HCT116 (cell line): ENCODE measurements at regions of chr4 and their contacts with region 1.

Region 1: GRCh38 chr4:169612871-169613859 is 782 bp upstream of the NEK1 start:
- DNase-seq: peak; percentile 68
- ATAC-seq: peak; percentile 65
- H3K4me3 ChIP-seq: peak overlapping the region; percentile 84 to 93
- H3K27ac ChIP-seq: peak overlapping the region; percentile 33; the same call in 1 of the 2 replicates
- H3K4me1 ChIP-seq: peaks cover 6 to 24% of the 10 kb centered on the region in 2 experiments; a peak in 3 of 4 replicates
- H3K27me3 ChIP-seq: no peaks in the 10 kb centered on the region
- CTCF ChIP-seq: peak in 2 of 3 experiments; percentile 77 to 85; a peak in 4 of 6 replicates
- POLR2A ChIP-seq: no peak
- RAD21 ChIP-seq: no peak

Region 2: GRCh38 chr4:169659716-169660670 is 46.8 kb after region 1 on chr4:
- CTCF ChIA-PET with region 1: interaction called, 4 read pairs
- POLR2A ChIA-PET with region 1: interaction called, 3 read pairs
- RAD21 ChIA-PET with region 1: no interaction called
- intact Hi-C with region 1: loop called (anchors 2 kb)
- DNase-seq: peak; percentile 99
- ATAC-seq: peak; percentile 94
- H3K4me3 ChIP-seq: peak overlapping the region; percentile 60 to 63
- H3K27ac ChIP-seq: peak overlapping the region; percentile 79
- H3K4me1 ChIP-seq: peaks cover 32 to 44% of the 10 kb centered on the region in 2 experiments
- H3K27me3 ChIP-seq: no peaks in the 10 kb centered on the region
- CTCF ChIP-seq: no peak
- POLR2A ChIP-seq: no peak
- RAD21 ChIP-seq: no peak

Region 3: DNA sequence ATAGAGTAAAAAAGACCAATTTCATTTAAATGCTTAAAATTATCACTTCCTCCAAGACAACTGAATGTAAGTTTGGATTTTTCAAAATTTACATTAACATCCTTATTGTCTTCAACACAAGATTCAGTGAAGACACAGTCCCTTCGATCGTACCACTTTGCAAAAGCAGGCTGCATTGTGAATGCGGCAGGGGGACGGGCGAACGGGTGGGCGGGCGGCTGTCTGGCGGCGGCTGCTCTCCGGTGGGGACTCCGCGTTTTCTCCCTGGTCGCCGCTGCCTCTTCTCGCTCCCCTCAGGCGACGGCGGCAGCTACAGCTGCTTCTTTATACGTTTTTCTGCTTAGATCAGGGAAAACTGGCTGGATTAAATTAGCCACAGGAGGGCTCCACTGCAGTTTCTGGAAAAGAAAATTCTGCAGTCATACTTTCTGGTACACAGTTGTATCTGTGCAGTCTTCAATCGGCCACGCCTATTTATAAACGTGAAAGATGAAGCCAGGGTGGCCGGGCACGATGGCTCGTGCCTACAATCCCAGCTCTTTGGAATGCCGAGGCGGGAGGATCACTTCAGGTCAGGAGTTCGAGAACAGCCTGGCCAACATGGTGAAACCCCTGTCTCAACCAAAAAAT is 178.5 kb after region 1 on chr4:
- CTCF ChIA-PET with region 1: interaction called, 4 read pairs
- POLR2A ChIA-PET with region 1: no interaction called
- RAD21 ChIA-PET with region 1: no interaction called
- intact Hi-C with region 1: loop called (anchors 5 kb)
- DNase-seq: peak; percentile 85
- ATAC-seq: peak; percentile 91
- H3K4me3 ChIP-seq: peak overlapping the region; percentile 34 to 46
- H3K27ac ChIP-seq: no peak overlapping the region
- H3K4me1 ChIP-seq: peaks cover 2 to 20% of the 10 kb centered on the region in 2 experiments; a peak in 2 of 4 replicates
- H3K27me3 ChIP-seq: peaks cover 12% of the 10 kb centered on the region; the same call in 1 of the 2 replicates
- CTCF ChIP-seq: peak; percentile 47 to 76 (median 63)
- POLR2A ChIP-seq: no peak
- RAD21 ChIP-seq: peak; percentile 71

Region 4: GRCh38 chr4:169810325-169811323 is 197.5 kb after region 1 on chr4:
- CTCF ChIA-PET with region 1: interaction called, 6 read pairs
- POLR2A ChIA-PET with region 1: no interaction called
- RAD21 ChIA-PET with region 1: interaction called in 1 of 2 experiments, 3 read pairs
- intact Hi-C with region 1: loop called (anchors 5 kb)
- DNase-seq: peak; percentile 84
- ATAC-seq: peak; percentile 89
- H3K4me3 ChIP-seq: no peak overlapping the region
- H3K27ac ChIP-seq: no peak overlapping the region
- H3K4me1 ChIP-seq: peaks cover 0 to 3% of the 10 kb centered on the region in 2 experiments; a peak in 2 of 4 replicates
- H3K27me3 ChIP-seq: no peaks in the 10 kb centered on the region
- CTCF ChIP-seq: peak; percentile 72 to 87 (median 86)
- POLR2A ChIP-seq: no peak
- RAD21 ChIP-seq: peak; percentile 87

Region 5: GRCh38 chr4:170027181-170027829 is 414.1 kb after region 1 on chr4:
- CTCF ChIA-PET with region 1: interaction called, 4 read pairs
- POLR2A ChIA-PET with region 1: no interaction called
- RAD21 ChIA-PET with region 1: no interaction called
- intact Hi-C with region 1: loop called (anchors 2 kb)
- DNase-seq: peak; percentile 95
- ATAC-seq: peak; percentile 72
- H3K4me3 ChIP-seq: peak overlapping the region; percentile 77 to 82
- H3K27ac ChIP-seq: peak overlapping the region; percentile 75
- H3K4me1 ChIP-seq: peaks cover 2 to 16% of the 10 kb centered on the region in 2 experiments
- H3K27me3 ChIP-seq: no peaks in the 10 kb centered on the region
- CTCF ChIP-seq: no peak
- POLR2A ChIP-seq: no peak
- RAD21 ChIP-seq: no peak

Region 6: GRCh38 chr4:170047771-170048354 is 434.7 kb after region 1 on chr4:
- CTCF ChIA-PET with region 1: interaction called, 16 read pairs
- POLR2A ChIA-PET with region 1: no interaction called
- RAD21 ChIA-PET with region 1: no interaction called
- intact Hi-C with region 1: loop called (anchors 2 kb)
- DNase-seq: peak; percentile 57
- ATAC-seq: 0 out of 2 replicates have a peak, but pooled peaks have one; percentile 55
- H3K4me3 ChIP-seq: no peak overlapping the region
- H3K27ac ChIP-seq: no peak overlapping the region
- H3K4me1 ChIP-seq: no peaks in the 10 kb centered on the region
- H3K27me3 ChIP-seq: no peaks in the 10 kb centered on the region
- CTCF ChIP-seq: peak; percentile 54 to 85 (median 72)
- POLR2A ChIP-seq: no peak
- RAD21 ChIP-seq: peak; percentile 89

Region 7: GRCh38 chr4:170089668-170090351 is 476.6 kb after region 1 on chr4 and contains the start of gene AADAT:
- CTCF ChIA-PET with region 1: interaction called, 4 read pairs
- POLR2A ChIA-PET with region 1: no interaction called
- RAD21 ChIA-PET with region 1: no interaction called
- intact Hi-C with region 1: loop called (anchors 1 kb)
- DNase-seq: peak; percentile 73
- ATAC-seq: peak; percentile 92
- H3K4me3 ChIP-seq: peak within 1 kb of the TSS; percentile 73 to 94
- H3K27ac ChIP-seq: peak within 1 kb of the TSS; percentile 54
- H3K4me1 ChIP-seq: peaks cover 9 to 20% of the 10 kb centered on the region in 2 experiments
- H3K27me3 ChIP-seq: no peaks in the 10 kb centered on the region
- CTCF ChIP-seq: peak; percentile 61 to 79 (median 70)
- POLR2A ChIP-seq: peak; percentile 29
- RAD21 ChIP-seq: peak; percentile 92
- total RNA-seq, gene AADAT: 15.4 TPM